Cardiac septum (tissue), 1 donor: ENCODE measurements at regions of chrX and their contacts with region 1.

Region 1: GRCh38 chrX:154436983-154437719 is at the start of gene GDI1:
- DNase-seq: no peak
- total RNA-seq, gene GDI1: 114 TPM

Region 2: DNA sequence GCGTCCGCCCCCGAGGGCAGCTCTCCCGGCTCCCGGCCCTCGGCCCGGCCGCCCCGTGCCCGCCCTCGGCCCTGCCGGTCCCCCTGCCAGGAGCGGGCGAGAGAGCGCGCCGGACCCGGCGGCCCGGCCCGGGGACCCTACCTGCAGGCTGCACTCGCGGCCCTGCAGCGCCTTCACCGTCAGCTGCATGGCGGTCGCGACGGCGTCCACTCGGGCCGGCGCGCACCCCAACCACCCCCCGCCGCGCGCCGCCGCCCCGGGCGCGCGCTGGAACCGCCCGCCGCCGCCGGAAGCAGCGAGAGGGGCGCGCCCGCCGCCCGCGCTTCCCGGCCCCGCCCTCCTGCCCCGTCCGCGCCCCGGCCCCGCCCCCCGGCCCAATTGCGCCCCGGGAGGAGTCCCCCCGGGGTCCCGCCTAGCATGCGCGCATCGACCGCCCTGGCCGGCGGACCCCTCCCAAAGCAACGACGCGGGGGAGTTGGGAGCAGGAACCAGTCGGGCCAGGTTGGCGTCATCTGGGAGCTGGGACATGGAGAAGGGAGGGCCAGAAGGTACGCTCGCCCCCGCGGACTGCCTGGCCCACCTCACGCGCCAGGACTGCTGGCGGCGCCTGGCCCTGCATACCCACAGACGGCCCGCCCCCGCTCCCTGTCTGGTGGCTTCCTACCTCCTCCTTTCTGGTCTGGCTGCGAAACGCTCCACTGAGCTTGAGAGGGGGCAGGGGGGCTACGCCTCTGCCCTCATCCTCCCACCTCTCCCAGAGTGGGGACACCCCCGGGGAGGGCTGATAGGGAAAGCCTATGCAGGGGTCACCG is 49.5 kb after region 1 on chrX and contains the start of gene UBL4A:
- intact Hi-C with region 1: loop called (anchors 5 kb)
- DNase-seq: peak; percentile 81
- total RNA-seq, gene UBL4A: 48.4 TPM